SK-N-SH (cell line): ENCODE measurements at regions of chrX and their contacts with region 1.

Region 1: DNA sequence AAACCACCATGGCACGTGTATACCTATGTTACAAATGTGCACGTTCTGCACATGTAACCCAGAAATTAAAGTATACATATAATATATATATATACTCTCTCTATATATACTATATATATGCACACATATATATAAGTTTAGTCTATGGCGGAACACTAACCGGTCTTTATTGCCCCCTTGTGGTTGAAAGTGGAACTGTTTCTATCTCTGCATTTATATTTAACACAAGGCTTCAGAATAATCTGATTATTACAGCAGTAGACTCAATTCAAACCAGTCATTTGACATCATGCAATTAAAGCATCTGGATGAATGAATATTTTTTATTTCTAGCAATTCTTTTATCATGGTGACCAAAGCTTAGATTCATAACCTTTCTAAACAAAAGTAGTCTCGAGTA is 14.6 kb downstream of the RAB9B start:
- DNase-seq: peak; percentile 30
- H3K4me3 ChIP-seq: no peak overlapping the region
- H3K27ac ChIP-seq: no peak overlapping the region
- H3K4me1 ChIP-seq: no peaks in the 10 kb centered on the region
- H3K27me3 ChIP-seq: no peaks in the 10 kb centered on the region
- CTCF ChIP-seq: peak; percentile 75
- EP300 ChIP-seq: no peak
- RAD21 ChIP-seq: peak; percentile 72

Region 2: GRCh38 chrX:103806862-103807474 is 10.5 kb before region 1 on chrX:
- CTCF ChIA-PET with region 1: interaction called, 13 read pairs
- POLR2A ChIA-PET with region 1: no interaction called
- DNase-seq: no peak
- H3K4me3 ChIP-seq: no peak overlapping the region
- H3K27ac ChIP-seq: no peak overlapping the region
- H3K4me1 ChIP-seq: no peaks in the 10 kb centered on the region
- H3K27me3 ChIP-seq: no peaks in the 10 kb centered on the region
- CTCF ChIP-seq: no peak
- EP300 ChIP-seq: no peak
- RAD21 ChIP-seq: no peak

Region 3: GRCh38 chrX:103831803-103832544 is 14.5 kb after region 1 on chrX and contains the start of gene RAB9B:
- CTCF ChIA-PET with region 1: interaction called, 15 read pairs
- POLR2A ChIA-PET with region 1: no interaction called
- DNase-seq: peak; percentile 83
- H3K4me3 ChIP-seq: peak within 1 kb of the TSS; percentile 63 to 65
- H3K27ac ChIP-seq: peak within 1 kb of the TSS in 1 of 2 experiments; percentile 12; a peak in 2 of 4 replicates
- H3K4me1 ChIP-seq: peaks cover 0 to 8% of the 10 kb centered on the region in 2 experiments; a peak in 1 of 4 replicates
- H3K27me3 ChIP-seq: no peaks in the 10 kb centered on the region; the same call in 1 of the 2 replicates
- CTCF ChIP-seq: no peak
- EP300 ChIP-seq: no peak
- RAD21 ChIP-seq: no peak
- polyA plus RNA-seq, gene RAB9B: 0.64 and 0.96 TPM in 2 replicates